ENCODE measurements at regions of chr16 and their contacts with region 1.

Region 1: DNA sequence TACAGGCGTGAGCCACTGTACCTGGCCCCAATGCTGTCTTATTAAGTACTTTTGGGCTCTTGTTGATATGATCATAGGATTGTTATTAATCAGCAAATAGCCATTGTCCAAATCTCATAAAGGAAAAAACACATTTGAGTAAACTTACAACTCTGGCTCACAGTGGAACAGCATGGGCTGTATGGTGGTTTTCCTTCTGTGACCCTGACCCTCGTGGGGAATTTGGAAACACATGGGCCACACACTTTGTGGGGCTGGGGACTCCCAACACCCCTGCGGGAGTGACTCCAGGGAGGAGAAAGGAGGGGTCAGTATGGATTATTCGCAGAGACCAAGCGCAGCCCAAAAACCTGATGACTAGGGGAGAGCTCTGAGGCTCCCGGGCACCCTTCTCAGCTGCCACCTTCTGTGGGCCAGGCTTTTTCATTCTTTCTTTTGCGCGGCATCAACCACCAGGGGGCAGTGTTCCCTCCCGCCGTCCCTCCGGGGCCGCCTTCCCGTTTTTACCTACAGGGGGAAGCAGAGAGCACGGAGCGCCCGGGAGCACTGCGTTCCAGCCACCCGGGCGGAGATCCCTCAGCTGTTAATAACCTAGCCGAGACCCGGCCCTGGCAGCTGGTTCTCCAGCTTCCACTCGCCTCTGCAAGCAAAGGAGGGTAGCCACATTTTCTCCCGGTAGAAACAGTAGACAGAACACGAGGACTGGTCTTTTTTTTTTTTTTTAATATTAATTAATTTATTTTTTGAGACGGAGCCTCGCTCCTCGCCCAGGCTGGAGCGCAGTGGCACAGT is 9.7 kb downstream of the TSNAXIP1 start:
- DNase-seq: peak; percentile 53 to 94 (median 83)

Region 2: GRCh38 chr16:67546761-67547422 is 269.5 kb before region 1 on chr16:
- intact Hi-C with region 1: no loop called
- DNase-seq: peak in 41 of 42 donors; percentile 57 to 90 (median 78)

Region 3: GRCh38 chr16:67672739-67673662 is 143.4 kb before region 1 on chr16:
- intact Hi-C with region 1: loop called (anchors 10 kb)
- DNase-seq: peak in 39 of 42 donors; percentile 53 to 85 (median 71)

Region 4: DNA sequence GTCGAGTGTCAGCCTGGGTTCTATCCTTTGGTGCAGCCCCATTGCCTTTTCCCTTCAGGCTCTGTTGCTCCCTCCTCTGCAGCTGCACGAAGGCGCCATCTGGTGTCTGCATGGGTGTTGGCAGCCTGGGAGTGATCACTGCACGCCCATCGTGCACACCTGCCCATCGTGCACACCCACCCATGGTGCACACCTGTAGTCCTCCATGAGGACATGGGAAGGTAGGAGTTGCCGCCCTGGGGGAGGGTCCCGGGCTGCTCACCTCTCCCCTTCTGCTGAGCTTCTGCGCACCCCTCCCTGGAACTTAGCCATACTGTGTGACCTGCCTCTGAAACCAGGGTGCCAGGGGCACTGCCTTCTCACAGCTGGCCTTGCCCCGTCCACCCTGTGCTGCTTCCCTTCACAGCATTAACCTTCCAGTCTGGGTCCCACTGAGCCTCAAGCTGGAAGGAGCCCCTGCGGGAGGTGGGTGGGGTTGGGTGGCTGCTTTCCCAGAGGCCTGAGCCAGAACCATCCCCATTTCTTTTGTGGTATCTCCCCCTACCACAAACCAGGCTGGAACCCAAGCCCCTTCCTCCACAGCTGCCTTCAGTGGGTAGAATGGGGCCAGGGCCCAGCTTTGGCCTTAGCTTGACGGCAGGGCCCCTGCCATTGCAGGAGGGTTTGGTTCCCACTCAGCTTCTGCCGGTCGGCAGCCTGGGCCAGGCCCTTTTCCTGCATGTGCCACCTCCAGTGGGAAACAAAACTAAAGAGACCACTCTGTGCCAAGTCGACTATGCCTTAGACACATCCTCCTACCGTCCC is 112.3 kb after region 1 on chr16:
- intact Hi-C with region 1: loop called (anchors 10 kb)
- DNase-seq: peak; percentile 78 to 93 (median 86)

Region 5: DNA sequence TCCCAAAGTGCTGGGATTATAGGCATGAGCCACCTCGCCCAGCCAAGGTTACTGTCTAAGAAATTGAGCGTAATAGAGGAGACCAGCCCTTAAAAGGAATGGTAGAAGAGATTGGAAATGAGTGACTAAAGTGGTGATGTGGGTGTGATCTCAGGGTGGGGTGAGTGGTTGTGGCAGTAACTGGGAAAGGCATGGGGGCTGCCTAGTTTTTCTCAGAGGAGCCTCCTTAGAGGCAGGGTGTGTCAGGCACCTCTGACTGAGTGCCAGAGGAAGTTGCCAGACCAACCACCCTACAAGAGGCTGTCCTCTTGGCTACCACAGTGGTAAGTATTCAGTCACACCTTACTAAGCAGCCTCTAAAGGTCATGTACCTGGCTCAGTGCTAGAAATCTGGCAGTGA is 215.5 kb after region 1 on chr16:
- intact Hi-C with region 1: loop called (anchors 10 kb)
- DNase-seq: peak in 12 of 42 donors; percentile 7 to 56 (median 26)

Measured in head of caudate nucleus (tissue), 42 donors.